BJ (cell line): ENCODE measurements at regions of chr2 and their contacts with region 1.

Region 1: DNA sequence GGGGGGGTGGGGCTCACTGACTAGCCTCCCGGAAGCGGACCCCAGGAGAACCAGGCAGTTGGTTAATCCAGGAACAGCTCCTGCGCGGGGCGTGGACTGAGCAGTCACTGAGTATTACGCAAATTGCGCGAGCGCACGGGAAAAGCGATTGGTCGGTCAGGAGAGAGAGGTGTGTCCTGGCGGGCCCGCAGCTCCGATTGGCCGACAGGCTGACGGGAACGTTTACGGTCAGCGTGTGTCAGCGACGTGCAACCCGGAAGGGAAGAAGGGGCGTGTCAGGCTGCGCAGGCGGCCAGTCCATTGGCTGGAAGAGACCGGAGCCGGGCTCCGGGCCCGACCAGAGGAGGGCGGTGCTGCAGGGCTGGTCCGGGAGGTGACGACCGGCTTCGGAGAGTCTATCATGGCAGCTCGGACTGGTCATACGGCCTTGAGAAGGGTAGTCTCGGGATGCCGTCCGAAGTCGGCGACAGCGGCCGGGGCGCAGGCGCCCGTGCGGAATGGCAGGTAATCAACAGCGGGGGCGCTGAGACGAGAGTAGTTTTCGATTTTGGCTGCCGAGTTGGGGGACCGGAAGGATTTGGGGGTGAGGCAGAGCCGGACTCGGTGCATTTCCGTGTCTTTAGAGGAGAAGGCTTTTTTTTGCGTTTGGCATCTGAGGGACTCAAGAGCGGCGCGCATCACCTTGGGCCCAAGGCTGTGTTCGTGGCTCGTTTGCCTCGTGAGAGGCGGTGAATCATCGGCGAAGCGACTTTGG is at the start of gene COQ10B:
- DNase-seq: peak; percentile 99
- H3K4me3 ChIP-seq: peak within 1 kb of the TSS; percentile 92
- H3K27me3 ChIP-seq: no peaks in the 10 kb centered on the region
- CTCF ChIP-seq: peak; percentile 47
- polyA plus RNA-seq, gene COQ10B: 1.7 and 4.4 TPM in 2 replicates

Region 2: GRCh38 chr2:197434541-197435513 is 18.5 kb before region 1 on chr2 and contains the start of gene SF3B1:
- CTCF ChIA-PET with region 1: no interaction called
- POLR2A ChIA-PET with region 1: interaction called, 18 read pairs
- DNase-seq: peak; percentile 90
- H3K4me3 ChIP-seq: peak within 1 kb of the TSS; percentile 86
- H3K27me3 ChIP-seq: no peaks in the 10 kb centered on the region
- CTCF ChIP-seq: no peak
- polyA plus RNA-seq, gene SF3B1: 187 and 398 TPM in 2 replicates

Region 3: DNA sequence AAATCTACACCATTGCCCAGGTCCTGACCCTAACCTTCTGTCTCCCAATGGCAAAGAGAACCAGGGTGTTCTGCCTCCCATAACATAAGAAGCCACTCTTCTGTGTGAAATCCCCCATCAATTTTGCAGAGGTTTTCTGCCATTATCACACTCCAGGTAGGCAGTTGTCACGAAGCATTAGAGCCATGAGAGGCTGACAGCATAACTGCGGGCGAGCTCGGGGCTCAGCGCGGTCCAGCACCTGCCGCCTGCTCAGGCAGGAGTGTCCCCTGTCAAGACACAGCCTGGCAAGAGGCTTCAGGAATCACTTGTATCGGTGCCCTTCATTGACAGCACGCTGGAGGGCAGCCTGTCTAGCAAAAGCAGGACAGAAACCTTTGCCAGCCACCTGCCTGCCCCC is 1753.2 kb after region 1 on chr2:
- CTCF ChIA-PET with region 1: no interaction called
- POLR2A ChIA-PET with region 1: interaction called, 11 read pairs
- DNase-seq: no peak
- H3K4me3 ChIP-seq: no peak overlapping the region
- H3K27me3 ChIP-seq: no peaks in the 10 kb centered on the region
- CTCF ChIP-seq: no peak